ENCODE measurements at regions of chr22 and their contacts with region 1.

Region 1: DNA sequence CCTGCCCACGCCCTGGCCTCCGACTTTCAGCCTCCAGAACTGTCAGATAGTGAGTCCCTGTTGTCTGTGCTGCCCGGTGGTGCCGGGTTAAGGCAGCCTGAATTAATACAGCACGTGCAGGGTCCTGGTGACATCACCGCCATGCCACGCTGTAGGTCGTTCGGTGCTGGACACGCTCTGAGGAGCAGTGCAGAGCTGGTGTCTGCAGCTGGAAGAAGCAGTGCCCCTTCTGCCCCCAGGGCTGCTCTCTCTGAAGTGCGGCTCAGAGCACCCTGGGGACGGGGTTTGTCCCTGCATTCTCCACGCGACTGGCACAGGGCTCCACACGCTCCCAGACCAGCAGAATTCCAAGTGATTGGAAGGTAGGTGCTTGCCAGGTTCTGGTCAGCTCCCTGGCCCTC is 831.5 kb downstream of the TBC1D22A start:
- DNase-seq: no peak
- ATAC-seq: no peak
- H3K4me3 ChIP-seq: no peak overlapping the region
- H3K27ac ChIP-seq: no peak overlapping the region
- H3K4me1 ChIP-seq: no peaks in the 10 kb centered on the region
- H3K27me3 ChIP-seq: peaks cover 0 to 13% of the 10 kb centered on the region in 2 experiments; a peak in 2 of 5 replicates
- CTCF ChIP-seq: no peak
- EP300 ChIP-seq: no peak
- POLR2A ChIP-seq: no peak
- RAD21 ChIP-seq: no peak

Region 2: GRCh38 chr22:45615364-45615763 is 1978.5 kb before region 1 on chr22:
- CTCF ChIA-PET with region 1: no interaction called
- POLR2A ChIA-PET with region 1: no interaction called
- in situ Hi-C with region 1: loop called (anchors 5 kb)
- intact Hi-C with region 1: no loop called
- DNase-seq: no peak
- ATAC-seq: no peak
- H3K4me3 ChIP-seq: no peak overlapping the region
- H3K27ac ChIP-seq: no peak overlapping the region
- H3K4me1 ChIP-seq: no peaks in the 10 kb centered on the region
- H3K27me3 ChIP-seq: peaks cover 0 to 2% of the 10 kb centered on the region in 2 experiments; a peak in 2 of 5 replicates
- CTCF ChIP-seq: no peak
- EP300 ChIP-seq: no peak
- POLR2A ChIP-seq: no peak
- RAD21 ChIP-seq: no peak

Region 3: GRCh38 chr22:47474464-47474863 is 119.4 kb before region 1 on chr22:
- CTCF ChIA-PET with region 1: no interaction called
- POLR2A ChIA-PET with region 1: no interaction called
- in situ Hi-C with region 1: no loop called
- intact Hi-C with region 1: no loop called
- DNase-seq: no peak
- ATAC-seq: no peak
- H3K4me3 ChIP-seq: no peak overlapping the region
- H3K27ac ChIP-seq: no peak overlapping the region
- H3K4me1 ChIP-seq: no peaks in the 10 kb centered on the region
- H3K27me3 ChIP-seq: no peaks in the 10 kb centered on the region; a peak in 2 of 5 replicates
- CTCF ChIP-seq: no peak
- EP300 ChIP-seq: no peak
- POLR2A ChIP-seq: no peak
- RAD21 ChIP-seq: no peak

Measured in HepG2 (cell line).